ENCODE measurements at regions of chr7 and their contacts with region 1.

Region 1: GRCh38 chr7:117399820-117400422 is 27.4 kb downstream of the ASZ1 start:
- DNase-seq: no peak
- ATAC-seq: peak; percentile 67
- H3K4me3 ChIP-seq: no peak overlapping the region
- H3K27ac ChIP-seq: no peak overlapping the region
- H3K4me1 ChIP-seq: no peaks in the 10 kb centered on the region
- H3K27me3 ChIP-seq: no peaks in the 10 kb centered on the region
- CTCF ChIP-seq: peak; percentile 11 to 63 (median 35); a peak in 3 of 6 replicates
- EP300 ChIP-seq: no peak
- POLR2A ChIP-seq: no peak
- RAD21 ChIP-seq: peak; percentile 71

Region 2: GRCh38 chr7:117424090-117424829 is 24.3 kb after region 1 on chr7:
- CTCF ChIA-PET with region 1: interaction called, 13 read pairs
- POLR2A ChIA-PET with region 1: no interaction called
- RAD21 ChIA-PET with region 1: interaction called, 7 read pairs
- SMC1A ChIA-PET with region 1: interaction called, 5 read pairs
- in situ Hi-C with region 1: no loop called
- intact Hi-C with region 1: no loop called
- DNase-seq: peak; percentile 24
- ATAC-seq: peak; percentile 88
- H3K4me3 ChIP-seq: no peak overlapping the region
- H3K27ac ChIP-seq: peak overlapping the region; percentile 27; the same call in 1 of the 2 replicates
- H3K4me1 ChIP-seq: no peaks in the 10 kb centered on the region
- H3K27me3 ChIP-seq: no peaks in the 10 kb centered on the region
- CTCF ChIP-seq: no peak
- EP300 ChIP-seq: peak; percentile 72 to 80; a peak in 2 of 4 replicates
- POLR2A ChIP-seq: no peak
- RAD21 ChIP-seq: no peak

Region 3: DNA sequence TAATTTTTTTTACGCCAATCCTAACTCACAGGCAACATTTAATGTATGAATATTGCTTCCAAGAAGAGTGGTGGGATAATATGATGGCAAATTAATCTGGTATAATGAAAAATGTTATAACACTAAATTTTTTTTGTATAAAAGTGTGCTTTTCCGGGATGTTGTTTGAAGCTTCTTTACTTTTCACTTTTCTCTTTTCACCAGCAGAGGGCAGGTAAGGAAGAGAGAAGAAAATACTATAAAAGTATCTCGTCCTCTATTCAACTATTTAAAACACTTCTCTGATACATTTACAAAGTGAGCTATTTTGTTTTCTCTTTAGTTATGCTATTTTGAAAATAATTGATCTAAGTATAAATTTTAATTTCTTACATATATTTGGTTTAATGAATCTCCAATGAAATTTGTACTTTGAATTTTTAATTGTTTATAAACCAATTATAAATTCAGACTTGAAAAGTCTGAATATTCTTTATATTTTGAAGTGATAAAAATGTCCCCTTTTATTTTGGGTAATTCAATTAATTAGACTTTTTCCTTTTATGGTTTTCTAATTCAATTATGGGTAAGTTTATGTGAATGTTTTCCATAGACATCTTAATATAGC is 59.2 kb after region 1 on chr7:
- CTCF ChIA-PET with region 1: interaction called, 39 read pairs
- POLR2A ChIA-PET with region 1: no interaction called
- RAD21 ChIA-PET with region 1: interaction called, 23 read pairs
- SMC1A ChIA-PET with region 1: interaction called, 27 read pairs
- in situ Hi-C with region 1: no loop called
- intact Hi-C with region 1: loop called (anchors 5 kb)
- DNase-seq: no peak
- ATAC-seq: peak; percentile 61
- H3K4me3 ChIP-seq: no peak overlapping the region
- H3K27ac ChIP-seq: no peak overlapping the region
- H3K4me1 ChIP-seq: no peaks in the 10 kb centered on the region
- H3K27me3 ChIP-seq: no peaks in the 10 kb centered on the region
- CTCF ChIP-seq: peak; percentile 38 to 56 (median 51); a peak in 5 of 6 replicates
- EP300 ChIP-seq: no peak
- POLR2A ChIP-seq: no peak
- RAD21 ChIP-seq: peak; percentile 71

Region 4: DNA sequence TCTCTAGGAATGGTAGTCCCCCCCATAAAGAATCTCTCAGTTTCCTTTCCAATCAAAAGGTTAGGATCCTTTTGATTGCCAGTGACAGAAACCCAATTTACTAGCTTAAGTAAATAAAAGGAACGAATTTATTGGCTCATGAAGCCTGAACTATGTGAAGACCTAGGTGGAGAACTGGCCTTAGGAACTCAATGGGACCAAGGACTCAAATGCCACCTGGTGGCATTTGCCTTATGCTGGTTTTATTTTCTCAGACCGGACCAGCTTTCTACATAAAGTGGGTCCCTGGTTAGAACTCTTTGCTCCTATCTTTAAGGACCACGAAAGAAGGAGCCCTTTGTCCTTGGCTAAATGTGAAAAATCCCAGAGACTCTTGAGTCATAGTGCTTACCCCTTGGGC is 105.3 kb after region 1 on chr7:
- CTCF ChIA-PET with region 1: interaction called, 31 read pairs
- POLR2A ChIA-PET with region 1: no interaction called
- RAD21 ChIA-PET with region 1: interaction called, 7 read pairs
- SMC1A ChIA-PET with region 1: interaction called, 14 read pairs
- in situ Hi-C with region 1: no loop called
- intact Hi-C with region 1: no loop called
- DNase-seq: no peak
- ATAC-seq: peak; percentile 55
- H3K4me3 ChIP-seq: no peak overlapping the region
- H3K27ac ChIP-seq: no peak overlapping the region
- H3K4me1 ChIP-seq: no peaks in the 10 kb centered on the region
- H3K27me3 ChIP-seq: no peaks in the 10 kb centered on the region
- CTCF ChIP-seq: peak in 2 of 3 experiments; percentile 12 to 13; a peak in 2 of 6 replicates
- EP300 ChIP-seq: no peak
- POLR2A ChIP-seq: no peak
- RAD21 ChIP-seq: peak; percentile 22; the same call in 1 of the 2 replicates

Region 5: DNA sequence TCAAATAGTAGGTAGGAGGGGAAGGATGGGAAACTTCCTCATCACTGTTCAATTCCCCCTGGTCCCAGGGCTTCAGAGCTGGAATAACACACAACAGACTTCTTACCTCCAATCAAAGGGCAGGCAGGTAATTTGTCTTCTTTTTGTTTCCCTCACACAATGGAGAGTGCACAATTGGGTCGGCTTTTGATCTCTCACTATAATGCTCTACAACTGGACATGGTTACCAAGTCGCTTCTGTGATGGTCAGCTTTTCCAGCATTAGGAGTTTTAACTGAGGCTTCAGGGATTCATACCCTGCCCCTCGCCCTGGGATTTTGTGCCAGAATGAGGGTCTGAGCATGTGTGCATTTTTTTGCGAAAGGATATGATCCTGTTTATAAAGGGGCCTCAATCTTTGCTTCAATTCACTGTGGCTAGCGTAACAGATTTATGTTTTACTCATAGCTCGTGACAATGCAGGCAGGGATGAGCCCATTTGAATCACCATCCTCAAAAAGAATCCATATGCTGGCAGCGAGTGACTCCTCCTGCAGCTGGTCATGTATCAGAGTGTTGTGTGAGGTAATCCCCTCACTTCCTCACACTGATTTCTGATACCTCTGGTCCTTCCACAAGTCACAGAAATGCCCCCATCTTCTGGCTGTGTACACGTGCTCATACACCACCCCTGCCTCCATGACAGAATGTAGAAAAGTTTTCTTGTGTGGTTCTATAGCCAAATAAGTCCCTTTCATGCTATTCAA is 283.7 kb after region 1 on chr7:
- CTCF ChIA-PET with region 1: interaction called, 3 read pairs
- POLR2A ChIA-PET with region 1: no interaction called
- RAD21 ChIA-PET with region 1: no interaction called
- SMC1A ChIA-PET with region 1: interaction called, 15 read pairs
- in situ Hi-C with region 1: no loop called
- intact Hi-C with region 1: no loop called
- DNase-seq: no peak
- ATAC-seq: peak; percentile 61
- H3K4me3 ChIP-seq: no peak overlapping the region
- H3K27ac ChIP-seq: no peak overlapping the region
- H3K4me1 ChIP-seq: no peaks in the 10 kb centered on the region
- H3K27me3 ChIP-seq: peaks cover 0 to 5% of the 10 kb centered on the region in 2 experiments; a peak in 1 of 4 replicates
- CTCF ChIP-seq: no peak
- EP300 ChIP-seq: no peak
- POLR2A ChIP-seq: no peak
- RAD21 ChIP-seq: no peak

Region 6: GRCh38 chr7:117731455-117731854 is 331.5 kb after region 1 on chr7:
- CTCF ChIA-PET with region 1: interaction called, 11 read pairs
- POLR2A ChIA-PET with region 1: interaction called, 5 read pairs
- RAD21 ChIA-PET with region 1: interaction called, 3 read pairs
- SMC1A ChIA-PET with region 1: interaction called, 5 read pairs
- in situ Hi-C with region 1: no loop called
- intact Hi-C with region 1: no loop called
- DNase-seq: peak; percentile 66
- ATAC-seq: peak; percentile 86
- H3K4me3 ChIP-seq: no peak overlapping the region
- H3K27ac ChIP-seq: no peak overlapping the region
- H3K4me1 ChIP-seq: no peaks in the 10 kb centered on the region
- H3K27me3 ChIP-seq: no peaks in the 10 kb centered on the region; a peak in 1 of 4 replicates
- CTCF ChIP-seq: no peak
- EP300 ChIP-seq: peak; percentile 54 to 80; a peak in 3 of 4 replicates
- POLR2A ChIP-seq: no peak
- RAD21 ChIP-seq: no peak

Measured in GM12878 (cell line).